Breast epithelium (tissue), 4 donors: ENCODE measurements at regions of chr4 and their contacts with region 1.

Region 1: DNA sequence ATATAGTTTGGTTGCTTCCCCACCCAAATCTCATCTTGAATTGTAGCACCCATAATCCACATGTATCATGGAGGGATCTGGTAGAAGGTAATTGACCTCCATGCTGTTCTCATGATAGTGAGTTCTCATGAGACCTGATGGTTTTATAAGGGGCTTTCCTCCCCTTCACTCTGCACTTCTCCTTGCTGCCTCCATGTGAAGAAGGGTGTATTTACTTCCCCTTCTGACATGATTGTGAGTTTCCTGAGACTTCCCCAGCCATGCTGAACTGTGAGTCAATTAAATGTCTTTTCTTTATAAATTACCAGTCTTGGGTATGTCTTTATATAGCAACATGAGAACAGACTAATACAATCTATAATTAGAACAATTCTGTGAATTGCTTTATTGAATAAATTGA is 11.9 kb upstream of the DCAF4L1 start:
- DNase-seq: no peak
- H3K4me3 ChIP-seq: no peak overlapping the region
- H3K27ac ChIP-seq: no peak overlapping the region
- H3K4me1 ChIP-seq: no peaks in the 10 kb centered on the region
- H3K27me3 ChIP-seq: no peaks in the 10 kb centered on the region
- CTCF ChIP-seq: no peak
- POLR2A ChIP-seq: no peak

Region 2: GRCh38 chr4:41178356-41179080 is 791.2 kb before region 1 on chr4:
- intact Hi-C with region 1: no loop called
- DNase-seq: no peak
- H3K4me3 ChIP-seq: no peak overlapping the region
- H3K27ac ChIP-seq: peak overlapping the region; percentile 15 to 57
- H3K4me1 ChIP-seq: peaks cover 5 to 9% of the 10 kb centered on the region in 2 donors
- H3K27me3 ChIP-seq: no peaks in the 10 kb centered on the region
- CTCF ChIP-seq: no peak
- POLR2A ChIP-seq: no peak

Region 3: DNA sequence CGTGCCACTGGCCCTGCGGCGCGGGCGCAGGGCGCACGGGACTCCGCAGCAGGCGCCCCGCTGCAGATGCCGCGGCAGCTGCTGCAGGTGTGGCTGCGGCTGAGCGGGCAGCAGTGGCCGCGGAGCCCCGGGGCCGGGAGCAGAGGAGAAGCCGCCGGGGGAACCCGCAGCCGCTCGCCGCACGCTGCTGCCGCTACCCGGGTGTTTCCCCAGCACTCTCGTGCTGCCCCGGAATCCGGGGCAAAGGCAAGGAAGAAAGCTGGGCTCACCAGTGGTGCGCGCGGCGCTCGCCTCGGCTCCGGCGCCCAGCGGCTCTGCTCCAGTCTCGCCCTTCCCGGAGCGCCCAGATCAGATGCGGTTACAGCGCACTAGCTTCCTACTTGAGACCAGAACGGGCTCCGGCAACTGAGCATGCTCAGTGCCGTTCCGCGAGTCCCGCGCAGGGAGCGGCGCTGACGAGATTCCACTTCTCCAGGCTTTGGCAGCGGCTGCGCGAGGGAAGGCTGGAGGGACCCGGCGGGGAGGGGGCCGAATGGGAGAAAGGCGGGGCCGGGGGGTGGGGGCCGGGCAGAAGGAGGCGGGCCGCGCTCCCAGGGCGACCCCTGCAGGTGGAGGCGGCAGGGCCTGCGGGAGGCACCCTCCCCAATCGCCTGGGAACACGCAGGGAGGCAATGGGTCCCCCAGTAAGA is 755.4 kb before region 1 on chr4 and contains the start of gene APBB2:
- intact Hi-C with region 1: no loop called
- DNase-seq: peak; percentile 91 to 94
- H3K4me3 ChIP-seq: peak within 1 kb of the TSS; percentile 75 to 88 (median 87)
- H3K27ac ChIP-seq: peak within 1 kb of the TSS; percentile 87 to 93
- H3K4me1 ChIP-seq: no peaks in the 10 kb centered on the region
- H3K27me3 ChIP-seq: no peaks in the 10 kb centered on the region
- CTCF ChIP-seq: peak in 1 of 3 donors; percentile 48
- POLR2A ChIP-seq: no peak
- total RNA-seq, gene APBB2: 87.4 to 192 (median 153) TPM

Region 4: DNA sequence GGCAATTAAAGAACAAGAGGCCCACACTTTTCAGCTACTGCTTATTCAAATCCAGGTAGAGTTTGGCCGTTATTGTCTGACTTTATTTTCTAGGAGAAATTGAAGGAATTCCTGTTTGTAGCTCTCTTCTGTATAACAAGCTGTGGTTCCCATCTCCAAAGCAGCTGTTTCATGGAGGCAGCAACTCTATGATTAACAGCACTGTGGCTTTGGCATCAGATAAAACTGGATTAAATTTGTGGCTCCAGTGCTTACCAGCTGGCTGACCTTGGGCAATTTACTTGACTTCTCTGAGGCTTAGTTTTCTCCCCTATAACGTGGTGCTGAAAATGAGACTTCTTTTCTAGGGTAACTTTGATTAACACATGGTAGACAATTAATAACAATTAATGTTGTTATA is 48.8 kb after region 1 on chr4:
- intact Hi-C with region 1: loop called (anchors 2 kb)
- DNase-seq: no peak
- H3K4me3 ChIP-seq: no peak overlapping the region
- H3K27ac ChIP-seq: no peak overlapping the region
- H3K4me1 ChIP-seq: no peaks in the 10 kb centered on the region
- H3K27me3 ChIP-seq: no peaks in the 10 kb centered on the region
- CTCF ChIP-seq: no peak
- POLR2A ChIP-seq: no peak